Mammary epithelial cell (primary cell): ENCODE measurements at regions of chr18 and their contacts with region 1.

Region 1: DNA sequence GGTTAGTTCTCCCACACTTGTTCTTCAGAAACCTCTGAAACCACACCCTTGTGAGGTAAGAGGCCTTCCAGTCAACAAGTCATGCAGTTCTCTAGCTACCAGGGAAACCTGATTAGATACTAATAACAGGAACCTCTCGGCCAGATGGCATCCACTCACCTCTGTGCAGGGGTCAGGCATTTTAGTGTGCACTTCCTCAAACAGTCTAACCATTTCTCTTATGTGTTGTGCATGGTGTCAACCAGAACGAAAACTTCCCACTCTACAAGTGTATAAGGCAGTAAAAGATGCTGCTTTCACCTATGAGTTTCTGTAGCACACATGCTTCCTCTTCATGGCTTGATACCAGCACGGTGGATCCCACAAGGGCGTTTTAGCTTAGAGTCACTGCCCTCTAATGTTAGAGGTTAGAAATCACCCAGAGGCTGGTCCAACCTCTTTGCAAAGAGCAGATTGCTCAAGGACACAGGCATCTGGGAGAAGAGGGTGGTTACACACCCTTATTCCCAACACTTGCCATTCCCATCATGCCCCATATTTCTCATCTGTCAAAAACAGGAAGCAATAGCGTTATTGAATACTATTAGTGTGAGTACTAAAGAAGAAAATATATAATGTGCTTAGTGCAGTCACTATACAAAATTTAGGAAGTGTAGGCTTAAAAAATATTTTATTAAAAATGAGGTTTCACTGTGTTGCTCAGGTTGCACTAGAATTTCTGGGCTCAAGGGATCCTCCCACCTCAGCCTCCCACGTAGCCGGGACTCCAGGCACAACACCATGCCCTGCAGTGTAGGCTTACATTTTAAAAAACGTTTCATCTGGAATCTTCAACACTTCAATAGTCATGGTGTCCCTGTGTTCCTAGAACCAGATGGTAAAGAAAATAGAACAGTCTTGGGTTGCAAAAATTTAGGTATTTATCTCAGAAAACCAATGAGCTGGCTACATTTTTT is 34.5 kb upstream of the RAB31 start:
- DNase-seq: peak; percentile 99
- H3K4me3 ChIP-seq: no peak overlapping the region
- H3K27ac ChIP-seq: peak overlapping the region; percentile 95
- H3K4me1 ChIP-seq: peaks cover 33% of the 10 kb centered on the region
- H3K27me3 ChIP-seq: no peaks in the 10 kb centered on the region
- CTCF ChIP-seq: peak; percentile 27 to 51

Region 2: GRCh38 chr18:9575558-9575957 is 98.0 kb before region 1 on chr18:
- CTCF ChIA-PET with region 1: interaction called, 3 read pairs
- dilution Hi-C with region 1: loop called (anchors 5 kb)
- in situ Hi-C with region 1: no loop called
- intact Hi-C with region 1: loop called (anchors 1 kb)
- DNase-seq: peak; percentile 74
- H3K4me3 ChIP-seq: no peak overlapping the region
- H3K27ac ChIP-seq: peak overlapping the region; percentile 34
- H3K4me1 ChIP-seq: peaks cover 5% of the 10 kb centered on the region
- H3K27me3 ChIP-seq: no peaks in the 10 kb centered on the region
- CTCF ChIP-seq: peak; percentile 89 to 99

Region 3: DNA sequence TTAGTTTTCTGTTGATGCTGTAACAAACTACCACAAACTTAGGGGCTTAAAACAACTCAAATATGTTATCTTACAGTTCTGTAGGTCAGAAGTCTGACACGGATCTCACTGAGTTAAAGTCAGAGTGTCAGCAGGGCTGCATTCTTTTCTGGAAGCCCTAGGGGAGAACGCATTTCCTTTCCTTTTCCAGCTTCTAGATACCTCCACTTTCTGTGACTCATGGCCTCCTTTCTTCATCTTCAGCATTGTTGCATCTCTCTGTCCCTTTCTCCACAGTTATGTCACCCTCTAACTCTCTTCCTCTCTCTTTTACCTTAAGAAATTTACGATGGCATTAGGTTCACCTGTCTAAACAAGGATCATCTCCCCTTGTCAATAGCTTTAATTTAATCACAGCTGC is 45.9 kb before region 1 on chr18:
- CTCF ChIA-PET with region 1: interaction called, 3 read pairs
- dilution Hi-C with region 1: no loop called
- in situ Hi-C with region 1: no loop called
- intact Hi-C with region 1: loop called (anchors 1 kb)
- DNase-seq: peak; percentile 70
- H3K4me3 ChIP-seq: no peak overlapping the region
- H3K27ac ChIP-seq: peak overlapping the region; percentile 66
- H3K4me1 ChIP-seq: peaks cover 18% of the 10 kb centered on the region
- H3K27me3 ChIP-seq: no peaks in the 10 kb centered on the region
- CTCF ChIP-seq: no peak

Region 4: GRCh38 chr18:9634856-9635255 is 38.7 kb before region 1 on chr18:
- CTCF ChIA-PET with region 1: interaction called, 11 read pairs
- dilution Hi-C with region 1: no loop called
- in situ Hi-C with region 1: no loop called
- intact Hi-C with region 1: no loop called
- DNase-seq: no peak
- H3K4me3 ChIP-seq: no peak overlapping the region
- H3K27ac ChIP-seq: no peak overlapping the region
- H3K4me1 ChIP-seq: peaks cover 17% of the 10 kb centered on the region
- H3K27me3 ChIP-seq: no peaks in the 10 kb centered on the region
- CTCF ChIP-seq: no peak

Region 5: DNA sequence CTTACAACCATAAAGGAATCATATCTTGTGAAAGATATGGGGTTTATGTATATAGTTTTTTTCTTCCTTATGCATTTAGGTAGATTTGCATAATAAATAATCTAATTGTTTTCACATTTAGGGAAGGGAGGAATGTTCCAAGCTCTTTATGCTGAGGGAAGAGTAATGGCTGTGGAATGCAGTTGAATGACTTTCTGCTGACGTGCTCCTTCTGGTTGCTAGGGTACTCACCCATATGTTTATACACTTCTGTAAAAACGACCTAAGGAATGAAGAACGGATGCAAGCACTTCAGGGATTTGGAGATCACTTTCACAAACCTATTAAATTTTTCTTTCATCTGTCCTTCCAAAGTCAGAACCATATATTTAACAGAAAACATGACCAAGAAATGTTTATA is 30.0 kb before region 1 on chr18:
- CTCF ChIA-PET with region 1: no interaction called
- dilution Hi-C with region 1: no loop called
- in situ Hi-C with region 1: no loop called
- intact Hi-C with region 1: loop called (anchors 1 kb)
- DNase-seq: peak; percentile 92
- H3K4me3 ChIP-seq: peak overlapping the region in 1 of 3 experiments; percentile 17
- H3K27ac ChIP-seq: peak overlapping the region; percentile 100
- H3K4me1 ChIP-seq: peaks cover 41% of the 10 kb centered on the region
- H3K27me3 ChIP-seq: no peaks in the 10 kb centered on the region
- CTCF ChIP-seq: no peak

Region 6: DNA sequence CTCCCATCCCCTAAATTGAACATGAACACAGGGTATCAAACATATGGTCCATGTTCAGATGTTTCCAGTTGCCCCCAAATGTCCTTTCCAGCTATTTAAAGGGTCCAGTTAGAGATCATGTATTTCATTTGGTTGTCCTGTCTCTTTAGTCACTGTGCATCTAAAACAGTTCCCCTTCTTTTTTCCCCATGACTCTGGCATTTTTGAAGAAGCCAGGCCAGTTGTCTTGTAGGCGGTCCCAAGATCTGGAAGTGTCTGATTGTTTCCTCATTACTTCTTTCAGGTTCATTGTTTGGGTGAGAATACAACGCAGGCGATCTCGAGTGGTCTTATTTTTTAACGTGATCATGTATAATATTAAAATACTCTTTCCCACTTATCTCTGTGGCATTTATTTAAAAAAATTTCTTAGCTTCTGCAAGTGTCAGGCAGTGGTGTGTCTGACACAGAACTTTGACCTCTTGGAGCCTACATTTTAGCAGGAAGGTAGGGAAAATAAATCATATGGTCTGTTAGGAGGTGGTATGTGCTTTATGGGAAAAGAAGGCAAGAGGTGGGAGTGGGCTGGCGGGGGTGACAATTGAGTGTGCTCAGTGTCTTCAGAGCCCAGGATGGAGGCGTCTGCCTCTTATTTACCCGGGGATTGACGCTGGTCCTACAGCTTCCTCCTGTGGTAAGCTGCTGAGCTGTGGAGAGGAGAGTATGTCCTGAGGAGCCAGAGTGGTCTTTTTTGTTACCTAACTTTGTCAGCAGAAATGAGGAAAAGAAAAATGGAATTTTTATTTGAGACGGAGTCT is 42.6 kb after region 1 on chr18:
- CTCF ChIA-PET with region 1: no interaction called
- dilution Hi-C with region 1: no loop called
- in situ Hi-C with region 1: no loop called
- intact Hi-C with region 1: no loop called
- DNase-seq: no peak
- H3K4me3 ChIP-seq: no peak overlapping the region
- H3K27ac ChIP-seq: no peak overlapping the region
- H3K4me1 ChIP-seq: peaks cover 10% of the 10 kb centered on the region
- H3K27me3 ChIP-seq: no peaks in the 10 kb centered on the region
- CTCF ChIP-seq: no peak